Ascending aorta (tissue), 2 donors: ENCODE measurements at regions of chr3 and their contacts with region 1.

Region 1: GRCh38 chr3:184777336-184778004 is 34.5 kb upstream of the VPS8 start:
- DNase-seq: peak; percentile 58 to 97
- H3K4me3 ChIP-seq: no peak overlapping the region
- H3K27ac ChIP-seq: no peak overlapping the region
- H3K4me1 ChIP-seq: no peaks in the 10 kb centered on the region
- H3K27me3 ChIP-seq: no peaks in the 10 kb centered on the region
- CTCF ChIP-seq: peak; percentile 74 to 91 (median 88)

Region 2: GRCh38 chr3:184362668-184363540 is 414.6 kb before region 1 on chr3:
- intact Hi-C with region 1: loop called (anchors 10 kb)
- DNase-seq: peak; percentile 79 to 98
- H3K4me3 ChIP-seq: peak overlapping the region; percentile 64 to 78
- H3K27ac ChIP-seq: peak overlapping the region; percentile 99 to 100
- H3K4me1 ChIP-seq: peaks cover 5 to 15% of the 10 kb centered on the region in 2 donors
- H3K27me3 ChIP-seq: no peaks in the 10 kb centered on the region
- CTCF ChIP-seq: peak in 2 of 3 experiments; percentile 56 to 68

Region 3: GRCh38 chr3:184711493-184712247 is 65.8 kb before region 1 on chr3 and contains the start of gene MAGEF1:
- intact Hi-C with region 1: loop called (anchors 1 kb)
- DNase-seq: peak; percentile 15 to 91
- H3K4me3 ChIP-seq: peak within 1 kb of the TSS; percentile 94 to 96
- H3K27ac ChIP-seq: peak within 1 kb of the TSS; percentile 92 to 96
- H3K4me1 ChIP-seq: peaks cover 3 to 11% of the 10 kb centered on the region in 2 donors
- H3K27me3 ChIP-seq: no peaks in the 10 kb centered on the region
- CTCF ChIP-seq: no peak
- total RNA-seq, gene MAGEF1: 5.2 TPM